ENCODE measurements at regions of chr10 and their contacts with region 1.

Region 1: GRCh38 chr10:147752-148317 is 12.6 kb downstream of the ZMYND11 start:
- DNase-seq: no peak
- H3K4me3 ChIP-seq: no peak overlapping the region
- H3K27ac ChIP-seq: no peak overlapping the region
- H3K4me1 ChIP-seq: no peaks in the 10 kb centered on the region
- H3K27me3 ChIP-seq: no peaks in the 10 kb centered on the region
- CTCF ChIP-seq: no peak
- POLR2A ChIP-seq: no peak

Region 2: DNA sequence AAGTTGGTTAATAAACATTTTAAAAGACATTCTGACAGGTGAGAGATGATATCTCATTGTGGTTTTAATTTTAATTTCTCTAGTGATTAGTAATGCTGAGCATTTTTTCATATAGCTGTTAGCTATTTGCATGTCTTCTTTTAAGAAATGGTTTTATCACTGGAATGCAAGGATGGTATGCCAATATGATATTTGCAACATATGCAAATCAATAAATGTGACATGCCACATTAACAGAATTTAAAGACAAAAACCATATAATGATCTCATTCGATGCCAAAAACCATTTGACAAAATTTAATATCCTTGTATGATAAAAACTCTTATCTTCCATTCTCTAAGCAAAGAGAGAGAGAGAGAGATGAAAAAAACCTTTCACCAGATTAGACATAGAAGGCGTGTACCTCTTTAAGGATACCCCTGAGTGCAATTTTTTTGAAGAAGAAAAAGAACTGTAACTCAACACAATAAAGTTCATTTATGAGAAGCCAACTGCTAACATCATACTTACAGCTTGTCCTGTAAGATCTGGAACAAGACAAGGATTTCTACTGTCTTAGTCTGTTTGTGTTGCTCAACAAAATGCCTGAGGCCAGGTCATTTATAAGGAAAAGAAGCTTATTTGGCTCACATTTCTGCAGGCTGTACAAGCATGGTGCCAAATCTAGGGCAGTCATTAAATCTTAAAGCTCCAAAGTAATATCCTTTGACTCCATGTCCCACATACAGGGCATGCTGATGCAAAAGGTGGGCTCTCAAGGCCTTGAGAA is 52.3 kb before region 1 on chr10:
- intact Hi-C with region 1: no loop called
- DNase-seq: no peak
- H3K4me3 ChIP-seq: no peak overlapping the region
- H3K27ac ChIP-seq: no peak overlapping the region
- H3K4me1 ChIP-seq: peaks cover 0 to 6% of the 10 kb centered on the region in 2 donors
- H3K27me3 ChIP-seq: no peaks in the 10 kb centered on the region
- CTCF ChIP-seq: no peak
- POLR2A ChIP-seq: no peak

Region 3: GRCh38 chr10:931416-932318 is 783.8 kb after region 1 on chr10 and contains the start of gene LARP4B:
- intact Hi-C with region 1: loop called (anchors 5 kb)
- DNase-seq: peak; percentile 96 to 97
- H3K4me3 ChIP-seq: peak within 1 kb of the TSS; percentile 79 to 93 (median 90)
- H3K27ac ChIP-seq: peak within 1 kb of the TSS; percentile 98 to 99
- H3K4me1 ChIP-seq: peaks cover 0 to 11% of the 10 kb centered on the region in 2 donors
- H3K27me3 ChIP-seq: no peaks in the 10 kb centered on the region
- CTCF ChIP-seq: no peak
- POLR2A ChIP-seq: no peak
- total RNA-seq, gene LARP4B: 47.5 to 70.8 (median 68.5) TPM